Right ventricle myocardium superior (tissue), 1 donor: ENCODE measurements at regions of chrX and their contacts with region 1.

Region 1: DNA sequence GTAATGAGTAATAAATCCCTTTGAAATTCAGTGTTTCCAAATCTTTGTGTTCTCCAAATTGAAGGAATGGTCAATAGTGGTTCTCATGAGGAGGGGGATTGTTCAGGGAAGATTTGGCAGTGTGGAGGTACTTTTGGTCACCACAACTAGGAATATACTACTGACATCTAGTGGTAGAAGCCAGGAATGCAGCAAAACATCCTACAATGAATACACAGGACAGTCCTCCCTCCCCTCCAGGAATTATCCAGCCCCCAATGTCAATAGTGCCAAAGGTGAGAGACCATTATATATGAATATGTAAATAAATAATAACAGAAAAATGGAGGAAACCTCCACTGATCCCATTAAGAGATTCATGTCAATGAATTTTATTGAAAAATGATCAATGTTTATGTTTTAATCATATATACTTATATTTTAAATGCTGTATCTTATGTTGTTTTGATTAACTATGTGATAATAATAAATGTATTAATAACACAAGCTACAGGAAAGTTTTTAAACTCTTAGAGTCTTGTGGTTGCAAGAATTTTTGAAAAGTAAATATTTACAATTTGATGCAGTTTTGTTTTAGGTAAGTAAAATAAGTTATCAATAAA is 14.4 kb upstream of the FAM9A start:
- DNase-seq: no peak
- ATAC-seq: no peak

Region 2: GRCh38 chrX:8755116-8755515 is 60.4 kb before region 1 on chrX:
- intact Hi-C with region 1: loop called (anchors 10 kb)
- DNase-seq: no peak
- ATAC-seq: no peak